ENCODE measurements at regions of chr10 and their contacts with region 1.

Region 1: GRCh38 chr10:28991326-28992270 is 297.3 kb upstream of the LYZL1 start:
- DNase-seq: peak; percentile 42 to 49
- H3K4me3 ChIP-seq: no peak overlapping the region
- H3K27ac ChIP-seq: no peak overlapping the region
- H3K4me1 ChIP-seq: no peaks in the 10 kb centered on the region
- H3K27me3 ChIP-seq: no peaks in the 10 kb centered on the region
- CTCF ChIP-seq: peak; percentile 68

Region 2: DNA sequence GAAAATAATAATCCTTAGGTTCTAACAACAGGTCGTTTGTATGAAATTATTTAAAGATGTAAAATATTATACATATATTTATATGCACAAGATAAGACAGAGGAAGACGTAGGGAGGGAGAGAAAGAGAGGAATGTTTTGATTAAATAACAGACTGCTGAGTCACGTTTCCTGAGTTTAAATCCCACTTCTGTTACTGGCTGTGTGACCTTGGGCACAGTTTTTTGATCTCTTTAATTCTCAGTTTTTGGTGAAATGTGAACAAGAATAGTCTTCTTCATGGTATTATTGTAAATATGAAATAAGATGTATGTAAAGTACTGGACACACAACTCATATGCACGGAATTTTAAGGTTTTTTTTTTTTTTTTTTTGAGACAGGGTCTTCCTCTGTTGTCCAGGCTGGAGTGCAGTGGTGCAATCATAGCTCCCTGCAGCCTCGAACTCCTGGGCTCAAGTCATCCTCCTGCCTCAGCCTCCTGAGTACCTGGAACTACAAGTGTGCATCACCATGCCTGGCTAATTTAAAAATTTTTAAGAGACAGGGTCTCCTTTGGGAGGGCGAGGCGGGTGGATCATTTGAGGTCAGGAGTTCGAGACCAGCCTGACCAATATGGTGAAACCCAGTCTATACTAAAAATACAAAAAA is 271.7 kb before region 1 on chr10:
- CTCF ChIA-PET with region 1: interaction called, 15 read pairs
- POLR2A ChIA-PET with region 1: no interaction called
- intact Hi-C with region 1: no loop called
- DNase-seq: no peak
- H3K4me3 ChIP-seq: no peak overlapping the region
- H3K27ac ChIP-seq: no peak overlapping the region
- H3K4me1 ChIP-seq: peaks cover 10% of the 10 kb centered on the region
- H3K27me3 ChIP-seq: no peaks in the 10 kb centered on the region
- CTCF ChIP-seq: no peak

Measured in PC-9 (cell line).